ENCODE measurements at regions of chr1 and their contacts with region 1.

Region 1: DNA sequence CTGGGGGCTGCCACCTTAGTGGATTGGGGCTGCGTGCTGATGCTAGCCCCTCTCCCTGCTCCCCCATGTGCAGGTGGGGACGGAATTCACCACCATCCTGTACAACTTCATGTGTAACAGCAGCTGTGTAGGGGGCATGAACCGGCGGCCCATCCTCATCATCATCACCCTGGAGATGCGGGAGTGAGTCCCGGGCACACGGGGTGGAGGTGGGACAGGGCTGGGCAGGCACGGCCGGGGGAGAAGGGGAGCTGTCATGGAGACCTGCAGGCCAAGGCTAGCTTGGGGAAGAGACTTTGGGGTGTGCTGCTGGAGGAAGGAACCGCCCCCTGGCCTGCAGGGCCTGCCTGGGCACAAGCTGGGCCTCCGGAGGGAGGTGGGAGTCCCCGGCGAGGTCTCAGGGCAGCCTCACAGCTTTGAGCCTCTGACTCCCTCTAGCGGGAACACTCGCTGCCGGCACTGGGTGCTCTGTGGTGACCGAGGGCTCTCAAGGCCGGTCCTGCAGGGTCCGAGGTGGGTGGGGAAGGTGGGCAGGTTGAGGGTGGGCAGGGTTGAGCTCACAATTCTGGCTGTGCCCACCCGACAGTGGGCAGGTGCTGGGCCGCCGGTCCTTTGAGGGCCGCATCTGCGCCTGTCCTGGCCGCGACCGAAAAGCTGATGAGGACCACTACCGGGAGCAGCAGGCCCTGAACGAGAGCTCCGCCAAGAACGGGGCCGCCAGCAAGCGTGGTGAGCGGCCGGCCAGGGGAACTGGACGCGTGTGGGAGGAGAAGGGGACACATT is 25.0 kb upstream of the CCDC27 start:
- DNase-seq: peak; percentile 73
- ATAC-seq: peak; percentile 68
- H3K4me3 Mint-ChIP-seq: no peak overlapping the region
- H3K27ac Mint-ChIP-seq: no peak overlapping the region
- H3K4me1 Mint-ChIP-seq: no peaks in the 10 kb centered on the region
- H3K27me3 Mint-ChIP-seq: peaks cover 4% of the 10 kb centered on the region; the same call in 1 of the 2 replicates
- CTCF ChIP-seq: no peak

Region 2: GRCh38 chr1:3530926-3531818 is 196.1 kb before region 1 on chr1:
- CTCF ChIA-PET with region 1: no interaction called
- POLR2A ChIA-PET with region 1: interaction called, 12 read pairs
- DNase-seq: peak; percentile 88
- ATAC-seq: peak; percentile 89
- H3K4me3 Mint-ChIP-seq: peak overlapping the region; percentile 88
- H3K27ac Mint-ChIP-seq: peak overlapping the region; percentile 99
- H3K4me1 Mint-ChIP-seq: peaks cover 10% of the 10 kb centered on the region
- H3K27me3 Mint-ChIP-seq: peaks cover 24% of the 10 kb centered on the region
- CTCF ChIP-seq: no peak

Region 3: DNA sequence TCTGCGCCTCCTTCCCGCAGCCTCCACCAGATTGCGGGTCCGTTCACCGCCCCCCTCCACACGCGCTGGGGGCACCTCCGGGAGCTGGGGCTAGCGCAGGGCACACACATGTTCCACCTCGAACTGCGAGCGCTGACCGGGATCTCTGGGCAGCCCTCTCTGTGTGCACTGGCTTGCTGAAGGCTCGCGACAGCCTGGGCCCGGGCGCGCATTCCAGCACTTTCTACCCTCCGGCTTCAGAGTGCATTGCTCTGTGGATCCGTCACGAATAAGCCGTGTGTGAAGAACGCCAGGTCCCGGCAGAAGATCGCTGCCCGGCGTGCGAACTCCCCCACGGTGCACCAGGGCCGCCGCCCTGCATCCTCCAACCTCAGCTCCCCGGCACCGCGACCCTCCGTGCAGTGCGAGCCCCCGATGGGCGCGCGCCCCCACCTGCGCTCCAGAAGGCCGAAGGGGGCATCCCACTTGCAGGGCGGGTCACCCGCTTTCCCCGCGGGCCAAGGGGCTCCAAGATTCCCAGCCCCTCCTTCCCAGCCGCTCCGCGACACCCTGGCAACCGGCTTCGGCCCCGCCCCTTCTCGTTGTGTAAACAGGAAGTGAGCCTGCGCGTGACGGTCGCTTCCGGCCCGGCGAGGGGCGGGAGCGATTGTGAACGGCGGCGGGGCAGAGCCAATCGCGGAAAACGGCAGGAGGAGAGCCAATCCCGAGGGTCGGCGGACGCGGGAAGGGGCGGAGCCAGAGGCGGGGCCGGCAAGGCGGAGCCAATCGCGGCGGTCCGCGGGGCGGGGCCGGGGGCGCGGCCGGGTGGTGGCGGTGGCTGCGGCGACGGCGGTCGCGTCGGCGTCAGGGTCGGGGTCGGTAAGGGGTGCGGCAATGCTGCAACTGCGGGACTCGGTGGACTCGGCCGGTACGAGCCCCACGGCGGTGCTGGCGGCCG is 102.8 kb before region 1 on chr1 and contains the start of gene TPRG1L:
- CTCF ChIA-PET with region 1: interaction called, 19 read pairs
- POLR2A ChIA-PET with region 1: no interaction called
- DNase-seq: peak; percentile 99
- ATAC-seq: peak; percentile 95
- H3K4me3 Mint-ChIP-seq: peak within 1 kb of the TSS; percentile 90
- H3K27ac Mint-ChIP-seq: peak within 1 kb of the TSS; percentile 41
- H3K4me1 Mint-ChIP-seq: peaks cover 12% of the 10 kb centered on the region
- H3K27me3 Mint-ChIP-seq: peaks cover 3% of the 10 kb centered on the region; the same call in 1 of the 2 replicates
- CTCF ChIP-seq: no peak
- total RNA-seq, gene TPRG1L: 20.9 to 22.3 TPM (median 20.9 TPM) in 3 replicates

Region 4: DNA sequence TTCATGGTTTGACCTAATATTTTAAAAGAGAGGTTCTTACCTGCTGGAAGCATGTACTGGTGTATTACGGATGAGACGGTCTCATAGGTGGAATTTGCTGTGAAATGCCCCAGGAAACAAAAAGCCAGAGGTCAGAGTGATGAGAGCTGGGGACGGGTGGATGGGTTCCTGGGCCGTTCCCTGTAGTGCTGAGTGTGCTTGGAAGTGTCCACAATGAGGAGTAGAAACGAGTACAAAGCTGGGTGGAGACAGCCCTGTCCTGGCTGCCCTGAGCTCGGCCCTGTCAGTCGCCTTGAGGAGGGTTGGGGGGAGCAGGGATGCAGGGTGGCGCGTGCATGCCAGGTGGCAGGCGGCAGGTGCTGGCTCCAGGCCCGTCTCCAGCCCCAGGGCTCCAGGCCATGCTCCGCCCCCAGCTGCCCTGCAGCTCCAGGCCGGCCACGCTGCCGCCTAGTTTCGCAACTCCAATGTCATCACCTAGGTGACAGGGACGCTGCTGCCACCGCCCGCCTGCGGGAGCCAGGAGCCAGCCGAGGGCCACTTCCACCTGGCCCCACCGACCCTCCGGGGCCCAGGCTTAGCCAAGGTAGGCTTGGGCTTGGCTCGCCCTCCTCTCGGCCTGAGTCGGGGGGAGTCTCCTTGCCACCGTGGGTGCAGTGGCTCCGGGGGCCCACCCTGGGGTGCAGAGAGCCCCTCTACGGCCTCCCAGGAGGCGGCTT is 58.5 kb before region 1 on chr1:
- CTCF ChIA-PET with region 1: interaction called, 15 read pairs
- POLR2A ChIA-PET with region 1: no interaction called
- DNase-seq: peak; percentile 75
- ATAC-seq: peak; percentile 83
- H3K4me3 Mint-ChIP-seq: no peak overlapping the region
- H3K27ac Mint-ChIP-seq: no peak overlapping the region
- H3K4me1 Mint-ChIP-seq: peaks cover 26% of the 10 kb centered on the region
- H3K27me3 Mint-ChIP-seq: no peaks in the 10 kb centered on the region; the same call in 1 of the 2 replicates
- CTCF ChIP-seq: no peak

Region 5: GRCh38 chr1:3702990-3703728 is 24.1 kb before region 1 on chr1:
- CTCF ChIA-PET with region 1: interaction called, 30 read pairs
- POLR2A ChIA-PET with region 1: no interaction called
- DNase-seq: no peak
- ATAC-seq: no peak
- H3K4me3 Mint-ChIP-seq: no peak overlapping the region
- H3K27ac Mint-ChIP-seq: no peak overlapping the region
- H3K4me1 Mint-ChIP-seq: peaks cover 9% of the 10 kb centered on the region
- H3K27me3 Mint-ChIP-seq: peaks cover 3% of the 10 kb centered on the region
- CTCF ChIP-seq: no peak

Region 6: GRCh38 chr1:3759796-3760195 is 32.6 kb after region 1 on chr1:
- CTCF ChIA-PET with region 1: interaction called, 10 read pairs
- POLR2A ChIA-PET with region 1: no interaction called
- DNase-seq: no peak
- ATAC-seq: no peak
- H3K4me3 Mint-ChIP-seq: no peak overlapping the region
- H3K27ac Mint-ChIP-seq: no peak overlapping the region
- H3K4me1 Mint-ChIP-seq: no peaks in the 10 kb centered on the region
- H3K27me3 Mint-ChIP-seq: peaks cover 28% of the 10 kb centered on the region
- CTCF ChIP-seq: no peak

Region 7: DNA sequence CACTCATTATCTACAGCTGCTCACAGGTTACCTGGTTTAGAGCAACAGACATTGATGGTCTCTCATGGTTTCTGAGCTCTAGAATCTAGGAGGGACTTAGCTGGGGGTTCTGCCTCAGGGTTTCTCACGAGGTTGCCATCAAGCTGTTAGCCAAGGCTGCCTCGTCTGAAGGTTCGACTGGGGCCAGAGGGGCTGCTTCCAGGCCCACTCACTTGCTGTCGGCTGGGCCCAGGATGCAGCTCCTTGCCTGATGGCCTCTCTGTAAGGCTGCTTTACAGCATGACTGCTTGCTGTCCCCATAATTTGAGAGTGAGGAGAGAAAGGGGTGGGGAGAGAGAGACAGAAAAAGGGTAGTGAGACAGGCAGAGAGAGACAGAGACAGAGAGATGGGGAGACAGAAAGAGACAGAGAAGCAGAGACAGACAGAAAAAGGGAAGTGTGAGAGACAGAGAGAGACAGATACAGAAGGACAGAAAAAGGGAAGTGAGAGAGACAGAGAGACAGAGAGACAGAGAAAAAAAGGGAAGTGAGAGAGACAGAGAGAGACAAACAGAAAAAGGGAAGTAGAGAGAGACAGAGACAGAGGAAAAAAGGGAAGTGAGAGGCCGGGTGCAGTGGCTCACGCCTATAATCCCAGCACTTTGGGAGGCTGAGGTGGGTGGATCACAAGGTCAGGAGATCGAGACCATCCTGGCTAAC is 279.6 kb after region 1 on chr1:
- CTCF ChIA-PET with region 1: no interaction called
- POLR2A ChIA-PET with region 1: no interaction called
- DNase-seq: no peak
- ATAC-seq: no peak
- H3K4me3 Mint-ChIP-seq: no peak overlapping the region
- H3K27ac Mint-ChIP-seq: no peak overlapping the region
- H3K4me1 Mint-ChIP-seq: no peaks in the 10 kb centered on the region
- H3K27me3 Mint-ChIP-seq: peaks cover 5% of the 10 kb centered on the region; the same call in 1 of the 2 replicates
- CTCF ChIP-seq: no peak

Measured in WTC11 (cell line).